Endothelial cell of umbilical vein (primary cell): ENCODE measurements at regions of chr11 and their contacts with region 1.

Region 1: DNA sequence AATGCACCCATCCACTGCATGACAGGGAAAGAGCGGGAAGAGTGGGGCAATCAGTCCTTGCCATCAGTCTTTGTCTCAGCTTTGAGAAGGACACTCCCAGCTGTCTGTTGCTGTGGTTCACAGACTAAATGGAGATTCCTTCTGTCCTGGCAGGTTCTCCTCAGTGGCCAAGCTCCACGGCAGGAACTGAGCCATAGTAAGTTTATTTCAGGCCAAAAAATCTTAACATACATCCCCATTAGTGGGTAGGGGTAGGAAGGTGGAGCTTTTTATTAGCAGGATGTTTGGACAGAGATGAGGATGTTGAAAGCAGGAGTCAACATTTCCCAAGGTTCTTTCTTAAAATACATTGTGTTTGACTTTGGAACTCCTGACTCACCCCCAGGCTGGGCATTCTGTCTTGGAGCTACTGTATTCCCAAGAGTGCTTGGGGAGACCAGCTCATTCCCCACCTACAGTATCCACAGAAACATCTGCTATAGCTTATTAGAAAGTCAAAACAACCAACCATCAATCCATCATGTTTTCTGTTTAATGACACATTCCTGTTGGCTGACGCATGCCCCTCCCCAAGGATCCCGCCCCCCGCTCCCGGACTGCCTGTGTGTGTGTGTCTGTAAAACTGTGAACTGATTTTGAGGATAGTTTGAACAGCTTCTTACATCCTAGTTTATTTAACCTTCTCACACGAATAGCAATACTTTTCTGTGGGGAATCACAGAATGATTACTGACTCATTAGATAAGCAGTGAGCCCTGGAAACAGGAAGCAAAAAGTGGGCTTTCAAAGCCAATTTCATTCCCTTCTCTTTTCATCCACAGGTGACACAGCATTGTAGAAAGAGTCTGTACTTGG is 109.5 kb downstream of the CCDC81 start:
- DNase-seq: peak; percentile 100
- H3K4me3 ChIP-seq: no peak overlapping the region
- H3K27ac ChIP-seq: peak overlapping the region; percentile 94
- H3K4me1 ChIP-seq: peaks cover 47% of the 10 kb centered on the region
- H3K27me3 ChIP-seq: no peaks in the 10 kb centered on the region
- CTCF ChIP-seq: no peak
- POLR2A ChIP-seq: peak; percentile 39

Region 2: GRCh38 chr11:86511086-86511551 is 27.0 kb after region 1 on chr11:
- CTCF ChIA-PET with region 1: interaction called, 17 read pairs
- POLR2A ChIA-PET with region 1: interaction called, 11 read pairs
- dilution Hi-C with region 1: no loop called
- intact Hi-C with region 1: loop called (anchors 1 kb)
- DNase-seq: peak; percentile 61
- H3K4me3 ChIP-seq: no peak overlapping the region
- H3K27ac ChIP-seq: no peak overlapping the region
- H3K4me1 ChIP-seq: peaks cover 31% of the 10 kb centered on the region
- H3K27me3 ChIP-seq: no peaks in the 10 kb centered on the region
- CTCF ChIP-seq: no peak
- POLR2A ChIP-seq: no peak

Region 3: DNA sequence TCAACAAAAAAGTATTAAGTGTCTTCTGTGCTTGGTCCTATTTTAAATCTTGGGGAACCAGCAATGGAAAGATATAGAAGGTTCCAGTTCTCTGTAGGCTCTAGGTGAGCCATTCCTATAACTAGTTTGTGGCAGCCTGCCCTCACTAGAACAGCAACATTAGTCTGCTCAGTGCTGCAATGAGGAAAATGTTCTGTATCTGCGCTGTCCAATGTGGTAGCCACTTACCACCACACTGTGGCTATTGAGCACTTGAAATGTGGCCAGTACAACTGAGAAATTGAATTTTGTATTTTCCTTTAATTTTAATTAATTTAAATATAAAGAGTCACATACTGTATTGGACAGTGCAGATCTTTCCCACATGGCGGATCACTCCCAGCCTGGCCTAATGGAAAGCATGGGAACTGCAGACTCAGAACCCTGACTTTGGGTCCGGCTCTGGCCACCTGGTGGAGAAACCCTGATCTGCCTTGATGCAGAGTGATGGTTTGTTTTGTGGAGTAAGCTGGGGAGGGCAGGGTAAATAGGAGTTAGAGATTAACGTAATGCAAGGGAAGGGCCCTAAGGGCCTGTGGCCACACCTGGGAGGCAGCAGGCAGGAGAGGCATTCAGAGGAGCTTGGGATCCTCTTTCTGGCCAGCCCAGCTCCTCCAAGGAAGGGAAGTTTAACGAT is 87.2 kb after region 1 on chr11:
- CTCF ChIA-PET with region 1: interaction called, 5 read pairs
- POLR2A ChIA-PET with region 1: no interaction called
- dilution Hi-C with region 1: loop called (anchors 25 kb)
- intact Hi-C with region 1: loop called (anchors 2 kb)
- DNase-seq: peak; percentile 37
- H3K4me3 ChIP-seq: no peak overlapping the region
- H3K27ac ChIP-seq: no peak overlapping the region
- H3K4me1 ChIP-seq: peaks cover 38% of the 10 kb centered on the region
- H3K27me3 ChIP-seq: no peaks in the 10 kb centered on the region
- CTCF ChIP-seq: peak; percentile 48 to 56
- POLR2A ChIP-seq: no peak

Region 4: GRCh38 chr11:86632499-86633269 is 148.5 kb after region 1 on chr11:
- CTCF ChIA-PET with region 1: no interaction called
- POLR2A ChIA-PET with region 1: no interaction called
- dilution Hi-C with region 1: no loop called
- intact Hi-C with region 1: loop called (anchors 1 kb)
- DNase-seq: peak; percentile 96
- H3K4me3 ChIP-seq: no peak overlapping the region
- H3K27ac ChIP-seq: peak overlapping the region; percentile 83
- H3K4me1 ChIP-seq: peaks cover 19% of the 10 kb centered on the region
- H3K27me3 ChIP-seq: no peaks in the 10 kb centered on the region
- CTCF ChIP-seq: peak in 1 of 2 donors; percentile 55
- POLR2A ChIP-seq: no peak

Region 5: DNA sequence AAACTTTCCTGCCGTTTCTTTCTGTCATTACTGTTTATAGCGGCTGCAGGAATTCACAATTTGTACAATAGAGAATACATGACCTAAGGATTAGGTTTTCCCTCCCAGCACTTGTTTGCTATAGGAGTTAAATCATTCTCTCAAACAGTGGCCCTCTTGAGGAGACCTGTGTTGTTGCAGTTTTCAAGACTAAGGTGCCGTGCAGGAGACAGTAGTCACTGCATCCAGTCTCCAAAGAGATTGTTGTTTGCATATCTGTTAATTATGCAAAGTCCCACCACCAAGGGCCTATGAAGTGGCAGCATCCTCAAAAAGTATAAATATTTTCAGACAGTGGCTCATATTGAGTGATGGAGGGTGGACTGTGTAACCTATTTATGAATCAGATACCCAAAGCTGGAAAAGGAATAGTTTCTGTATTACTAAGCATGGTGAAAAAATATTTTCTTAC is 318.5 kb after region 1 on chr11:
- CTCF ChIA-PET with region 1: interaction called, 14 read pairs
- POLR2A ChIA-PET with region 1: no interaction called
- dilution Hi-C with region 1: no loop called
- intact Hi-C with region 1: loop called (anchors 1 kb)
- DNase-seq: peak; percentile 80
- H3K4me3 ChIP-seq: peak overlapping the region; percentile 82 to 96 (median 95)
- H3K27ac ChIP-seq: peak overlapping the region; percentile 96
- H3K4me1 ChIP-seq: peaks cover 63% of the 10 kb centered on the region
- H3K27me3 ChIP-seq: no peaks in the 10 kb centered on the region
- CTCF ChIP-seq: peak; percentile 57 to 60
- POLR2A ChIP-seq: no peak

Region 6: DNA sequence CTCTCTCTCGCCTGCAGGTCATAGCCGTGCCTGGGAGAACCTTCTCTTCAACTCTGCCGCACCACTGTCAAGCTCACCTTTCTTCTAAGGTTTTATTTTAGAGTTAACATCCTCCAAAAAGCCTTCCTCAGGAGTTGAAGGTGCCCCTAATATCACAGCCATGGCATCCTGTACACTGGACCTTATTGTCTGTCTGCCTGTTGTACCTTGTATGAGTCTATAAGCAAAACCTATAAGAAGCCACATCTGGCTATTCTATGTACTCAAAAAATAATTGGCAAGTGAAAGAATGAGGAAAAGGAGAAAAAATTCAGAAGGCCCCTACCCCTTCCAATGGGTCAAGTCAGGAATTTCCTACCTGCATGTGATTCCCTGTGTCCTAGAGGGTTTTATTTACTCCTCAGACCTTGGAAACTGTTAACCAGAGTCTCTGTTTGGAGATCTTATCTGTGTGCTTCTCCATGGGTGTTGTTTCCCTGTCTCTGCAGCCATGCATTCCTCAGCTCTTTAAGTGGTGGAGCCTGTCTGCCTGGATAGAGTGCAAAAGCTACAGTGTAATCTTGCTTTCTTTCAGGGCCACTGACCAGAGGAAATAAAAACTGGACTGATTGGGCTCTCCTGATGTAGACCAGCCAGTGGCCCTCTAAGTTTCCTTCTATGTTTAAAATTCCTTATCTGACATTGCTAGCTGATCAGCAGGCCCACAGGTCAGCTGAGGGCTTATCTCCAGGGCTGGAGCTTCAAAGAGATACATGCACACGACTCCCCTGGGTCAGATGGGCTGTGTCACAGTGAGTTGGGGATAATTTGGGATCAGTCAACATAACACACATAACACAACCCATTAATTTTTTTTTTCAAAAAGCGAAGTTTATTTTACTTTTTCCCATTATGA is 515.9 kb after region 1 on chr11:
- CTCF ChIA-PET with region 1: no interaction called
- POLR2A ChIA-PET with region 1: no interaction called
- dilution Hi-C with region 1: no loop called
- intact Hi-C with region 1: no loop called
- DNase-seq: peak; percentile 31
- H3K4me3 ChIP-seq: no peak overlapping the region
- H3K27ac ChIP-seq: no peak overlapping the region
- H3K4me1 ChIP-seq: no peaks in the 10 kb centered on the region
- H3K27me3 ChIP-seq: no peaks in the 10 kb centered on the region
- CTCF ChIP-seq: no peak
- POLR2A ChIP-seq: no peak